WTC11 (cell line): ENCODE measurements at regions of chr5 and their contacts with region 1.

Region 1: DNA sequence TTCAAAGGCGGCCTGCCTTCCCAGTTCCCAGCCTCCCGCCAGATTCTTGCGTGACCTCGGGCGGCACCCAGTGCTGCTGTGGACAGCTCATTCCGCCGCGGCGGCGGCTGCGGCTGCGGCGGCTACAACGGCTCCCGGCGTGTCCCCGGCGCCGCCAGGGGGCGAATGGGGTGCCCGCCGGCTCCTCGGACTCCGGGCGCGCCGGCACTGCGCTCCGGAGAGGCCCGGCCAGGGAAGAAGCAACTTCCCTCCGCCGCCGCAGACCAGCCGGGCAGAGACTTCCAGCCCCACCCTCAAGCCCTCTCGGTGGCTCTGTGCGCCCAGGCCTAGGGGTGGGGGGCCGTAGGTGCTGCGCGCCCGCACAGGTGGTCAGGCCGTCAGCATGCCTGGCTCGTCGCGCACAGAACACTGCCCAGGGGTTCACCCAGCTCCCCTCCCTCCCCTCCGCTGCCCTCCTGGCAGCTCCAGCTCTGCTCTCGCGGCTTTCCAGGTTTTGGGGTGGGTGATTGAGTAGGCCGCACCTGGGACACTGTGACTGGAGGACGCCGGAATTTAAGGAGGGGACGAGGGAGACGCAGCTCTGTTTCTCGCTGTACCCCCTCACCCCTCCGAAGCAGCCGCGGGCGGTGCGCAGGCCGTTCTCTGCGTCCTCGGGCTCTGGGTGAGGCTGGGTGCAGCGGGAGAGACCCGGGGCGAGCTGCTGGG is 20.2 kb downstream of the IGIP start:
- DNase-seq: peak; percentile 71
- ATAC-seq: peak; percentile 57
- H3K4me3 Mint-ChIP-seq: peak overlapping the region; percentile 75
- H3K27ac Mint-ChIP-seq: no peak overlapping the region
- H3K4me1 Mint-ChIP-seq: peaks cover 17% of the 10 kb centered on the region
- H3K27me3 Mint-ChIP-seq: peaks cover 53% of the 10 kb centered on the region
- CTCF ChIP-seq: no peak

Region 2: DNA sequence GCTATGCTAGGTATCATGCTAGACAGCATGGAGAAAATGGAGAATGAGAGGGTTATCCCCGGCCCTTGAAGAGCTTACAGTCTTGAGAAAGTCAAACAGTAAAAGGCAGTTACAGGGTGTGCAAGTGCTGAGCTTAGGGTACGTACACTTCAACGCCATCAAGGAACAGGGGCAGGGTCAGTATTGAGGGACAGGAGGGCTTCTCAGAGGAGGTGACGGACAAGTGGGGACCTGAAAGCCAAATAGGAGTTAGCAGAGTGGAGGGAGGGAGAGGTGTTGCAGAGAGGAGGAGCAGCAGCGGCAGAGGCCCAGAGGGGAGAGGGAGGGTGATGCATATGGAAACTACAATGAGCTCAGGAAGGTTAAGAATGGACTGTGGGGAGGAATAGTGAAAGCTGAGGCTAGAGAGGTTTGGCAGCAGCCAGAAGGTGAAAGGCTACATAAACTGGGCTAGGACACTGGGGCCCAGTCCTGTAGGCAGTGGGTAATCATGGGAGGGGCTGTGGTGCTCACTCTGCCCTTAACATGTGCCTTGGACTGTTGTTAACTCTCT is 190.8 kb before region 1 on chr5:
- CTCF ChIA-PET with region 1: no interaction called
- POLR2A ChIA-PET with region 1: no interaction called
- DNase-seq: no peak
- ATAC-seq: peak; percentile 68
- H3K4me3 Mint-ChIP-seq: no peak overlapping the region
- H3K27ac Mint-ChIP-seq: no peak overlapping the region
- H3K4me1 Mint-ChIP-seq: peaks cover 33% of the 10 kb centered on the region
- H3K27me3 Mint-ChIP-seq: no peaks in the 10 kb centered on the region
- CTCF ChIP-seq: no peak

Region 3: DNA sequence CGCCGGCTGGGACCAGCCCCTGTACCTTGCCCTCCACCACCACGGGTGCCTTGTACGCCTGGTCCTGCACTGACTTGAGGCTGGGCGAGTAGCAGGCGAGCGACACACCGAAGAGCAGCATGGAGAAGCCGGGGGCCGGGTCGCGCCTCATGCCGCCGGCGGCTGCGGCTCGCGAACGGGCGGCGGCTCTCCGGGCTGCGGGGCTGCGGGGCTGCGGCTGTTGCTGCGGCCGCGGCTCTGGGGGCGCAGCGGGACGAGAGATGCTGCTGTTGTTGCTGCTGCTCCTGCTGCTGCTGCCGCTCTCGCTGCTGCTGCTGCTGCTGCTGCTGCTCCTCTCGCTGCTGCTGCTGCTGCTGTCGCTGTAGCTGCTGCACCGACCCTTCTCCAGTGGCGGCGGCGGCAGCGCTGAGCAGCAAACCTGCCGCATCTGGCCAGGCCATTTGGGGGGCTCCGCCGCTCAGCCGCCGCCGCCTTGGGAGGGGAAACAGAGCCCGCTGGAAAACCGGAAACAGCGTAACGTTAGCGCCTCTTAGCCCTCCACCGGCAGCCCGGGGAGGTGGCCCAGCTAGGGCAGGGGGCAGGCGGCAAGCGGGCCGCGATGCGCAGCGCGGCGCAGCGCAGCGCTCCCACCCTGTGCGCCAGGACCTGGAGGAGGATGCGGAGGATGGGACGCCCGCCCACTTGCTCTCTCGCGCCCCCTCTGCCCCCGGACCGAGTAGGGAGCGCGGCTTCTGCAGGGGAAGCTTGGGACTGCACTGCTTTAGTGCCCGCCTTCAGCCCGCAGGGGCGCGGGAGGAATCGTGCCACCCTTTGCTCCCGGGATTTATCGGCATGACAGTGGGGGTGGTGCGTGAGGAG is 103.1 kb before region 1 on chr5 and contains the start of gene NRG2:
- CTCF ChIA-PET with region 1: interaction called, 25 read pairs
- POLR2A ChIA-PET with region 1: no interaction called
- DNase-seq: peak; percentile 88
- ATAC-seq: peak; percentile 89
- H3K4me3 Mint-ChIP-seq: peak within 1 kb of the TSS; percentile 70
- H3K27ac Mint-ChIP-seq: no peak within 1 kb of the TSS
- H3K4me1 Mint-ChIP-seq: peaks cover 28% of the 10 kb centered on the region
- H3K27me3 Mint-ChIP-seq: peaks cover 86% of the 10 kb centered on the region
- CTCF ChIP-seq: no peak
- total RNA-seq, gene NRG2: 0.44 to 0.73 TPM (median 0.46 TPM) in 3 replicates

Region 4: GRCh38 chr5:140073296-140073695 is 72.7 kb before region 1 on chr5:
- CTCF ChIA-PET with region 1: interaction called, 75 read pairs
- POLR2A ChIA-PET with region 1: no interaction called
- DNase-seq: no peak
- ATAC-seq: no peak
- H3K4me3 Mint-ChIP-seq: no peak overlapping the region
- H3K27ac Mint-ChIP-seq: no peak overlapping the region
- H3K4me1 Mint-ChIP-seq: no peaks in the 10 kb centered on the region
- H3K27me3 Mint-ChIP-seq: peaks cover 9% of the 10 kb centered on the region
- CTCF ChIP-seq: peak; percentile 27; the same call in 1 of the 2 replicates

Region 5: GRCh38 chr5:140107312-140108083 is 38.5 kb before region 1 on chr5:
- CTCF ChIA-PET with region 1: interaction called, 58 read pairs
- POLR2A ChIA-PET with region 1: interaction called, 7 read pairs
- DNase-seq: peak; percentile 88
- ATAC-seq: peak; percentile 68
- H3K4me3 Mint-ChIP-seq: peak overlapping the region; percentile 90
- H3K27ac Mint-ChIP-seq: peak overlapping the region; percentile 96
- H3K4me1 Mint-ChIP-seq: peaks cover 46% of the 10 kb centered on the region
- H3K27me3 Mint-ChIP-seq: peaks cover 89% of the 10 kb centered on the region
- CTCF ChIP-seq: no peak

Region 6: GRCh38 chr5:140113699-140114263 is 32.2 kb before region 1 on chr5 and contains the start of gene PURA:
- CTCF ChIA-PET with region 1: interaction called, 73 read pairs
- POLR2A ChIA-PET with region 1: interaction called, 5 read pairs
- DNase-seq: peak; percentile 96
- ATAC-seq: peak; percentile 85
- H3K4me3 Mint-ChIP-seq: peak within 1 kb of the TSS; percentile 86
- H3K27ac Mint-ChIP-seq: peak within 1 kb of the TSS; percentile 73; the same call in 1 of the 2 replicates
- H3K4me1 Mint-ChIP-seq: peaks cover 73% of the 10 kb centered on the region
- H3K27me3 Mint-ChIP-seq: peaks cover 77% of the 10 kb centered on the region
- CTCF ChIP-seq: no peak; the same call in 1 of the 2 replicates
- total RNA-seq, gene PURA: 6.0 to 9.0 TPM (median 6.4 TPM) in 3 replicates

Region 7: GRCh38 chr5:140131967-140132409 is 14.0 kb before region 1 on chr5:
- CTCF ChIA-PET with region 1: interaction called, 42 read pairs
- POLR2A ChIA-PET with region 1: no interaction called
- DNase-seq: no peak
- ATAC-seq: 0 out of 2 replicates have a peak, but pooled peaks have one; percentile 36
- H3K4me3 Mint-ChIP-seq: no peak overlapping the region
- H3K27ac Mint-ChIP-seq: no peak overlapping the region
- H3K4me1 Mint-ChIP-seq: peaks cover 15% of the 10 kb centered on the region
- H3K27me3 Mint-ChIP-seq: no peaks in the 10 kb centered on the region
- CTCF ChIP-seq: no peak

Region 8: GRCh38 chr5:140157032-140157803 is 11.2 kb after region 1 on chr5:
- CTCF ChIA-PET with region 1: interaction called, 92 read pairs
- POLR2A ChIA-PET with region 1: interaction called, 9 read pairs
- DNase-seq: peak; percentile 94
- ATAC-seq: peak; percentile 91
- H3K4me3 Mint-ChIP-seq: peak overlapping the region; percentile 67
- H3K27ac Mint-ChIP-seq: no peak overlapping the region
- H3K4me1 Mint-ChIP-seq: peaks cover 28% of the 10 kb centered on the region
- H3K27me3 Mint-ChIP-seq: peaks cover 17% of the 10 kb centered on the region
- CTCF ChIP-seq: peak; percentile 86